ENCODE measurements at regions of chr9 and their contacts with region 1.

Region 1: DNA sequence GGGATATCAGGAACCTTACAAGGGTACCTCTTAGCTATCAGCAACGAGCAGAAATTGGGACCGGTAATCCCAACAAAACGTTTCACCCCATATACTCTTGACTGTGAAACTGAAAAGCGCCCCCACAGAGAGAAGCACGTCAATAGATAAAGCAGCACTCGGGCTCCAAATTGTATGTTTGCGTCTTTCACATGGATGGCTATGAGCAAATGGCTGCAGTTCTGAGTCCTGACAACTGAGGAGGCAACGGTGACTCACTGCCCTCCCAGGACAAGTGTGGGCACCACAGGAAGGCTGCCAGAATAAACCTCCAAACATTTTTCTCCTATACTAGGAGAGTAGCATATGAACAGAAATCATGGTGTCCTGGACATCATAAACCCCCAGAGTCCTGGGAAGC is 36.6 kb downstream of the SEMA4D start:
- DNase-seq: peak in 1 of 2 donors; percentile 44
- ATAC-seq: no peak
- H3K4me3 ChIP-seq: no peak overlapping the region
- H3K4me3 Mint-ChIP-seq: no peak overlapping the region
- H3K27ac ChIP-seq: no peak overlapping the region
- H3K27ac Mint-ChIP-seq: no peak overlapping the region
- H3K4me1 ChIP-seq: peaks cover 93% of the 10 kb centered on the region
- H3K4me1 Mint-ChIP-seq: peaks cover 81 to 84% of the 10 kb centered on the region in 2 donors
- H3K27me3 ChIP-seq: no peaks in the 10 kb centered on the region
- H3K27me3 Mint-ChIP-seq: no peaks in the 10 kb centered on the region
- CTCF ChIP-seq: no peak

Region 2: GRCh38 chr9:89442981-89443814 is 18.1 kb before region 1 on chr9:
- intact Hi-C with region 1: loop called (anchors 2 kb)
- DNase-seq: no peak
- ATAC-seq: no peak
- H3K4me3 ChIP-seq: no peak overlapping the region
- H3K4me3 Mint-ChIP-seq: peak overlapping the region; percentile 92
- H3K27ac ChIP-seq: peak overlapping the region; percentile 37
- H3K27ac Mint-ChIP-seq: peak overlapping the region; percentile 93 to 97
- H3K4me1 ChIP-seq: peaks cover 95% of the 10 kb centered on the region
- H3K4me1 Mint-ChIP-seq: peaks cover 63 to 86% of the 10 kb centered on the region in 2 donors
- H3K27me3 ChIP-seq: no peaks in the 10 kb centered on the region
- H3K27me3 Mint-ChIP-seq: no peaks in the 10 kb centered on the region
- CTCF ChIP-seq: no peak